ENCODE measurements at regions of chr3 and their contacts with region 1.

Region 1: GRCh38 chr3:4978204-4978965 is 852 bp upstream of the BHLHE40 start:
- DNase-seq: peak; percentile 65 to 96 (median 87)

Region 2: GRCh38 chr3:4722103-4722502 is 256.3 kb before region 1 on chr3:
- intact Hi-C with region 1: loop called (anchors 5 kb)
- DNase-seq: peak in 12 of 42 donors; percentile 39 to 76 (median 49)

Region 3: GRCh38 chr3:5690904-5691532 is 712.6 kb after region 1 on chr3:
- intact Hi-C with region 1: no loop called
- DNase-seq: no peak